ENCODE measurements at regions of chr1 and their contacts with region 1.

Region 1: GRCh38 chr1:197659171-197659570 is 116.1 kb downstream of the DENND1B start:
- DNase-seq: no peak
- ATAC-seq: no peak
- H3K4me3 ChIP-seq: no peak overlapping the region
- H3K27ac ChIP-seq: no peak overlapping the region
- H3K4me1 ChIP-seq: no peaks in the 10 kb centered on the region; the same call in 1 of the 2 replicates
- H3K27me3 ChIP-seq: no peaks in the 10 kb centered on the region
- CTCF ChIP-seq: no peak
- POLR2A ChIP-seq: no peak
- RAD21 ChIP-seq: no peak

Region 2: GRCh38 chr1:197587815-197588517 is 71.2 kb before region 1 on chr1:
- CTCF ChIA-PET with region 1: no interaction called
- POLR2A ChIA-PET with region 1: no interaction called
- dilution Hi-C with region 1: no loop called
- in situ Hi-C with region 1: no loop called
- intact Hi-C with region 1: loop called (anchors 10 kb)
- DNase-seq: no peak
- ATAC-seq: no peak
- H3K4me3 ChIP-seq: no peak overlapping the region
- H3K27ac ChIP-seq: no peak overlapping the region
- H3K4me1 ChIP-seq: no peaks in the 10 kb centered on the region
- H3K27me3 ChIP-seq: no peaks in the 10 kb centered on the region
- CTCF ChIP-seq: no peak
- POLR2A ChIP-seq: no peak
- RAD21 ChIP-seq: no peak

Region 3: GRCh38 chr1:197692965-197693364 is 33.8 kb after region 1 on chr1:
- CTCF ChIA-PET with region 1: no interaction called
- POLR2A ChIA-PET with region 1: no interaction called
- dilution Hi-C with region 1: no loop called
- in situ Hi-C with region 1: no loop called
- intact Hi-C with region 1: loop called (anchors 5 kb)
- DNase-seq: peak; percentile 31
- ATAC-seq: peak; percentile 59; the same call in 1 of the 2 replicates
- H3K4me3 ChIP-seq: no peak overlapping the region
- H3K27ac ChIP-seq: no peak overlapping the region
- H3K4me1 ChIP-seq: no peaks in the 10 kb centered on the region; the same call in 1 of the 2 replicates
- H3K27me3 ChIP-seq: no peaks in the 10 kb centered on the region
- CTCF ChIP-seq: peak; percentile 46
- POLR2A ChIP-seq: no peak
- RAD21 ChIP-seq: peak; percentile 57